Panc1 (cell line): ENCODE measurements at regions of chrX and their contacts with region 1.

Region 1: GRCh38 chrX:46376246-46376885 is 168.9 kb downstream of the ZNF674 start:
- DNase-seq: peak; percentile 57
- ATAC-seq: peak; percentile 98
- H3K4me3 ChIP-seq: no peak overlapping the region
- H3K27ac ChIP-seq: peak overlapping the region; percentile 81
- H3K4me1 ChIP-seq: peaks cover 14% of the 10 kb centered on the region
- H3K27me3 ChIP-seq: no peaks in the 10 kb centered on the region
- CTCF ChIP-seq: peak; percentile 64

Region 2: DNA sequence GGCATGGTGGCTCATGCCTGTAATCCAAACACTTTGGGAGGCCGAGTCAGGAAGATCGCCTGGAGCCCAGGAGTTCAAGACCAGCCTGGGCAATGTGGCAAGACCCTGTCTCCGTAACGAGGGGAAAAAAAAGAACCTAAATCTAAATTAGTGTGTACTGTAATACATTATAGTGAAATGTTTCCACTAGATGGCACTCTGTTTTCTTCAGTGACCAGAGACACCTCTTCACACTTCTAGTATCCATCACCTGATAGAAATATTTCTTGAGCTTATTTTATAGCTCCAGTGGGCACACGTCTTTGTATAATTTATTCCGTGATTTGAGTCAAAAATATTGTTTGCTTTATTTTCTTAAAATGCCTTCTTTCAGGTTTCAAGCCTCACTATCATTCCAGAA is 574.8 kb before region 1 on chrX:
- CTCF ChIA-PET with region 1: interaction called, 14 read pairs
- POLR2A ChIA-PET with region 1: no interaction called
- in situ Hi-C with region 1: no loop called
- intact Hi-C with region 1: no loop called
- DNase-seq: no peak
- ATAC-seq: peak; percentile 79
- H3K4me3 ChIP-seq: peak overlapping the region; percentile 17 to 53
- H3K27ac ChIP-seq: peak overlapping the region; percentile 84
- H3K4me1 ChIP-seq: peaks cover 55% of the 10 kb centered on the region
- H3K27me3 ChIP-seq: no peaks in the 10 kb centered on the region
- CTCF ChIP-seq: peak; percentile 62

Region 3: GRCh38 chrX:45824471-45824870 is 551.9 kb before region 1 on chrX:
- CTCF ChIA-PET with region 1: no interaction called
- POLR2A ChIA-PET with region 1: no interaction called
- in situ Hi-C with region 1: no loop called
- intact Hi-C with region 1: loop called (anchors 10 kb)
- DNase-seq: peak; percentile 84
- ATAC-seq: peak; percentile 97
- H3K4me3 ChIP-seq: no peak overlapping the region
- H3K27ac ChIP-seq: no peak overlapping the region
- H3K4me1 ChIP-seq: peaks cover 9% of the 10 kb centered on the region
- H3K27me3 ChIP-seq: no peaks in the 10 kb centered on the region
- CTCF ChIP-seq: peak; percentile 80

Region 4: GRCh38 chrX:46325312-46325877 is 51.0 kb before region 1 on chrX:
- CTCF ChIA-PET with region 1: no interaction called
- POLR2A ChIA-PET with region 1: no interaction called
- in situ Hi-C with region 1: no loop called
- intact Hi-C with region 1: loop called (anchors 10 kb)
- DNase-seq: no peak
- ATAC-seq: peak; percentile 72
- H3K4me3 ChIP-seq: peak overlapping the region; percentile 42 to 61; a peak in 3 of 4 replicates
- H3K27ac ChIP-seq: peak overlapping the region; percentile 97
- H3K4me1 ChIP-seq: peaks cover 38% of the 10 kb centered on the region
- H3K27me3 ChIP-seq: no peaks in the 10 kb centered on the region
- CTCF ChIP-seq: no peak